MCF 10A (cell line): ENCODE measurements at regions of chr2 and their contacts with region 1.

Region 1: DNA sequence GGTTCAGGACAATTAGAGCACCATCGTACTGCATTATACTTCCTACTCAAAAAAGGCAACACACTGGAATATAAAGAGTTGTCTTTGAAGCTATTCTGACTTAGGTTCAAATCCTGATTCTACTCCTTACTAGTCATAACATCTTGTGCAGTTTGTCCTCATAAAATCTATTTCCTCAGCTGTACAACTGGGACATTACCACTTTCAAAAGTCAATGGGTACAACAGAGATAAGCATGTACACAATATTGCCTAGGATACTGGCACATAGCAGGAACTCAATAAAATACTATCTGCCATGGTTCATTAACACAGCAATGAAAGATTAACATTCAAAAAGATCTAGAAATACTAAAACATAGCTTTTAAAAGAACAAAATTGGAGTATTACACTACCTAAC is 11.3 kb downstream of the SOS1 start:
- DNase-seq: no peak
- H3K4me3 Mint-ChIP-seq: no peak overlapping the region
- H3K27ac Mint-ChIP-seq: no peak overlapping the region
- H3K4me1 Mint-ChIP-seq: peaks cover 12% of the 10 kb centered on the region
- H3K27me3 Mint-ChIP-seq: no peaks in the 10 kb centered on the region
- CTCF ChIP-seq: no peak

Region 2: DNA sequence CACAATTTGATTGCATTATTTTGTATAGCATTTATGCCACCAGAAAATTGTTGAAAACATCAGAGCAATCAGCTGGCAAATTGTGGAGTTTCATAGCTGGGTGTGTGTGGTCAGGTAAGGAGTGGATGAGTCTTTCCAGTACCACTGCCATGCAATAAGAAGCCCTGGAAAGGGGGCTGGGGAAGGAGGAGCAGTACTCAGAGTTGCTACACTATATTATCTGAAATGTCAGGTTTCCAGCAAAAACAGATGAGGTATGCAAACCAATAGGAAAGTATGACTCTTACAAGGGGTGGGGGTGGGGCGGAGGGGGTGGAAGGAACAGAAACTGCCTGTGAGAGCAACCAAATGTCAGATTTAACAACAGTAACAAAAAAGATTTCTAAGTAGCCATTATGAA is 100.9 kb before region 1 on chr2:
- CTCF ChIA-PET with region 1: no interaction called
- POLR2A ChIA-PET with region 1: no interaction called
- intact Hi-C with region 1: no loop called
- DNase-seq: no peak
- H3K4me3 Mint-ChIP-seq: no peak overlapping the region
- H3K27ac Mint-ChIP-seq: peak overlapping the region; percentile 54
- H3K4me1 Mint-ChIP-seq: peaks cover 5% of the 10 kb centered on the region
- H3K27me3 Mint-ChIP-seq: no peaks in the 10 kb centered on the region
- CTCF ChIP-seq: no peak

Region 3: DNA sequence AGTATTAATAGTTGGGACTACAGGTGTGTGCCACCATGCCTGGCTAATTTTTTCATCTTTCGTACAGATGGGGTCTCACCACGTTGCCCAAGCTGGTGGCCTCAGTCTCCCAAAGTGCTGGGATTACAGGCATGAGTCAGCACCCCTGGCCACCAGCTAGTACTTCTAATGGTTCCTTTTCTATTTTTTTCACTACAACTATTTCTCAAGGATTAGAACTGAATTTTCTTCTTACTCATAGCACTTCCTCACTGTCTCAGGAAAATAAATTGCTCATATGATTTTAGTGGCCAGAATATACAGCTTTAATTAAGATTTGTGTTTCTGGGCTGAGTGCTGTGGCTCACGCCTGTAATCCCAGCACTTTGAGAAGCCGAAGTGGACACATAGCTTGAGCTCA is 54.6 kb after region 1 on chr2:
- CTCF ChIA-PET with region 1: interaction called, 10 read pairs
- POLR2A ChIA-PET with region 1: no interaction called
- intact Hi-C with region 1: no loop called
- DNase-seq: no peak
- H3K4me3 Mint-ChIP-seq: no peak overlapping the region
- H3K27ac Mint-ChIP-seq: no peak overlapping the region
- H3K4me1 Mint-ChIP-seq: no peaks in the 10 kb centered on the region
- H3K27me3 Mint-ChIP-seq: no peaks in the 10 kb centered on the region
- CTCF ChIP-seq: no peak